Esophagus muscularis mucosa (tissue), 4 donors: ENCODE measurements at regions of chr2 and their contacts with region 1.

Region 1: DNA sequence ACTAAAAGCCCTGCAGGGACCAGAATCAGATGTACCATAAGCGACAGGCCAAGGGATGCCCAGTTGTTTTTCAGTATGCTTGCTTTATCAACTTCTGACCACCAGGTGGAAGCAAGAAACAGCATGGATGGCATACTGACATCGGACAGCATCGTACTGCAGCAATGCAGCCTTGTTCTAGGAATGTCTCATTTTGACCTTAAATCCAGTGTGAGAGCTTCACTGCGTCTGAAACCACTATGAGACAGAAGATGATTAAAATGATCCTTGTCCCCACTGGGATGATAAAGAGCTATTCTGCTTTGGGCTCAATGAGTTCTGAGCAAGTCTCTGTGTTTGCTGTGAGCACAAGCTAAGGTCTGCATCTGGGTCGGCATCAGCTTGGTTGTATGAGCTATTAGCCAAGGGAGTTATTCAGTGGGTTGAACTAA is 54.3 kb downstream of the CDK15 start:
- DNase-seq: no peak
- H3K4me3 ChIP-seq: no peak overlapping the region
- H3K27ac ChIP-seq: peak overlapping the region in 1 of 4 donors; percentile 4
- H3K4me1 ChIP-seq: peaks cover 5 to 34% (median 28%) of the 10 kb centered on the region in 4 donors
- H3K27me3 ChIP-seq: no peaks in the 10 kb centered on the region
- CTCF ChIP-seq: peak; percentile 83 to 88 (median 83)
- EP300 ChIP-seq: no peak
- POLR2A ChIP-seq: no peak

Region 2: DNA sequence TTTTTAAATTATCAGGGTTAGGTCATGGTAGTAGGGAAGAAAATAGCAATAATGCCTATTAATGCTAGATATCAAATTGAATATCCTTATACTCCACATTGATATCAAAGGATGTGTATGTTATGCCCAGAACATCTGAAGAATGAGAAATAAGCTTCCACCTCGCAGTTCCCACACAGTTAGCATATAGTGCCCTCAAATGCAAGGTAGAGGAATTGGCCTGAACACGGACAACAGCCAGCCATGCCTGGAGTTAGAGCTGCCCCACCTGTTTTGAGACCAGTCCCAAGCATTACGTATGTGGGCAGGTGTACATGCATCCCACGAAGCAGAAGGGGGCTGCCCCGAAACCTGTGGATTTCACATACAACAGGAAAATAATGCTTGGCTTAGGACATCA is 298.1 kb after region 1 on chr2:
- intact Hi-C with region 1: loop called (anchors 5 kb)
- DNase-seq: no peak
- H3K4me3 ChIP-seq: no peak overlapping the region
- H3K27ac ChIP-seq: no peak overlapping the region
- H3K4me1 ChIP-seq: peaks cover 5 to 10% (median 10%) of the 10 kb centered on the region in 4 donors
- H3K27me3 ChIP-seq: no peaks in the 10 kb centered on the region
- CTCF ChIP-seq: peak; percentile 22 to 45 (median 36)
- EP300 ChIP-seq: no peak
- POLR2A ChIP-seq: no peak

Region 3: GRCh38 chr2:202178342-202178958 is 317.8 kb after region 1 on chr2:
- intact Hi-C with region 1: loop called (anchors 5 kb)
- DNase-seq: no peak
- H3K4me3 ChIP-seq: no peak overlapping the region
- H3K27ac ChIP-seq: no peak overlapping the region
- H3K4me1 ChIP-seq: no peaks in the 10 kb centered on the region
- H3K27me3 ChIP-seq: no peaks in the 10 kb centered on the region
- CTCF ChIP-seq: peak; percentile 81 to 87 (median 85)
- EP300 ChIP-seq: no peak
- POLR2A ChIP-seq: no peak